ENCODE measurements at regions of chr16 and their contacts with region 1.

Region 1: DNA sequence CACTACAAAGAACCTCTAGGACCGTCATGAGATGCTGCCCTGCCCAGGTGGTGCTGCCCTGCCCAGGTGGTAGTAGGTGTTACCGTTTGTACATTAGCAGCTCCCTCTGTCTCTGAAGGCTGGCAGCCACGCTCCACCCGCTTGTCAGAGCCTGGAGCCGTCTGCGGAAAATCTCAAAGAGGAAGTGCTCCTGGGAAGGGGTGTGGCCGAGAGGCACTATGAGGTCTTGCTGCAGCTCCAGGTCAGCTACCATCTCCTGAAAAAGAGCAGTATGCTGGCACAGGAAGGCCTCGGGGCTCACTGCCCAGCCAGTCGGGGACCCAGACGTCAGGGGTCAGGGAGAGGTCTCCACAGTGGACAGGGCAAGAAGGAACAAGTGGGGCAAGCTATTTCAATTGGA is 28.3 kb downstream of the ZNF276 start:
- DNase-seq: peak in 1 of 2 donors; percentile 26
- ATAC-seq: peak in 4 of 8 donors; percentile 30 to 55 (median 34)
- H3K4me3 ChIP-seq: no peak overlapping the region
- H3K27ac ChIP-seq: no peak overlapping the region
- H3K4me1 ChIP-seq: peaks cover 0 to 4% (median 0%) of the 10 kb centered on the region in 9 donors
- H3K27me3 ChIP-seq: no peaks in the 10 kb centered on the region
- CTCF ChIP-seq: no peak

Region 2: DNA sequence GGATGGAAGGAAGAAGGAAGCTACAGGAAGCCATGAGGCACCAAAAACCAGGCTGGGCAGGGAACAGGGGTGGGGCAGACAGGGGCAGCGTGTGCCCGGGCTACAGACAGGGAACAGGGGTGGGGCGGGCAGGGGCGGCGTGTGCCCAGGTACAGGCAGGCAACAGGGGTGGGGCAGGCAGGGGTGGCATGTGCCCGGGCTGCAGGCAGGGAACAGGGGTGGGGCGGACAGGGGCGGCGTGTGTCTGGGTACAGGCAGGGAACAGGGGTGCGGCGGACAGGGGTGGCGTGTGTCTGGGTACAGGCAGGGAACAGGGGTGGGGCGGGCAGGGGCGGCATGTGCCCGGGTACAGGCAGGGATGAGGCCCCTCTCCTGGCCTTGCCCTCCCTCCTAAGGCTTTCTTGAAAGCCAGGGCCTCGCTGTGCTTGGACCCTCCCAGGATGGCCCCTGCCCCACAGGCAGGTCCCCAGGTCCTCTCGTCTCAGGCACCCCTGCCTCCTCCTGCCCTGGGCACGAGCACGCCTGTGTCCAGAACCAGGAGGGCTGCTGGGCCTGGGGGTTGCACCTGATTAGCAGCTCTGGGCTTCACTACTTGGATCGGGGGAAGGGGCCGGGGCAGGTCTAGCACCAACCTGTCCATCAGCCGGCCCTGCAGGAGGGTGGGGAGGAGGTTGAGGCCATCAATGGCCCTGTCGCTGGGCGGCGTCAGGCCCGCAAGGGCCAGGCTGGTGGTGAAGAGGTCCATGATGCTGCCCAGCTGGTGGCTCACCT is 923.4 kb before region 1 on chr16:
- intact Hi-C with region 1: loop called in 1 of 10 experiments (anchors 5 kb)
- DNase-seq: no peak
- ATAC-seq: no peak
- H3K4me3 ChIP-seq: no peak overlapping the region
- H3K27ac ChIP-seq: no peak overlapping the region
- H3K4me1 ChIP-seq: no peaks in the 10 kb centered on the region
- H3K27me3 ChIP-seq: no peaks in the 10 kb centered on the region
- CTCF ChIP-seq: no peak

Region 3: GRCh38 chr16:89798832-89799370 is 49.3 kb after region 1 on chr16:
- intact Hi-C with region 1: loop called in 1 of 10 experiments (anchors 5 kb)
- DNase-seq: peak; percentile 19 to 36
- ATAC-seq: peak; percentile 65 to 90 (median 86)
- H3K4me3 ChIP-seq: peak overlapping the region in 5 of 10 donors; percentile 0 to 26 (median 22)
- H3K27ac ChIP-seq: peak overlapping the region in 6 of 10 donors; percentile 39 to 72 (median 52)
- H3K4me1 ChIP-seq: peaks cover 0 to 14% (median 9%) of the 10 kb centered on the region in 9 donors
- H3K27me3 ChIP-seq: no peaks in the 10 kb centered on the region
- CTCF ChIP-seq: no peak

Region 4: DNA sequence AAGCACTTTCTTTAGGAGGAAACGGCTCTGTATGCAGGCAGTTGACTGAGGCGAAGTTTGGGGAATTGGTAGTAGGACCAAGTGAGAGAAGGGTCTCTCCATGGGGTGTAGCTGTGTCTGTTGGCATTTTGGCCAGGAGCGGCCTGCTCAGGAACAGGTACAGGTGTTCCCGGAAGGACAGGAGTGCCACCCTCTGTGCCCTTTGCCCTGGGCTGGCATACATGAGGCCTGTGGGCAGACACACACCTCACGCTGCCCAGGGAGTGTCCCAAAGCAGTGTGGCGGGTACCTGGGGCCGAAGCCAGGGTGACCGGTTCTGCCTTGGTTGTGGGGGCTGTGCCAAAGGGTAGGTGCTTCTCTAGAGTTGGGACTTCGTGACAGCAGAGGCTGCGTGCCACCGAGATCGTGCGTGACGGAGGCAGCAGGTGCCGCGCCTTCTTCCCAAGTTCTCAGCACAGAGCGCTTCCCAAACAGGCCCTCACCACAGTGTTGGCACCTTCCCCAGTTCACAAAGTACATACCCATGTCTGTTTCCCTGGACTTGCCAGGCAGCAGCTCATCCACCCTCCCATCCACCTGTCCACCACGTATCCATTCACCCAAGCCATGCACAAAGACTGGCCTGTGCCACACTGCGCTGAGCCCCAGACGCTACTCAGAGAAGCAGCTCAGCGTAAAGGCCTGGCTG is 103.8 kb after region 1 on chr16:
- intact Hi-C with region 1: loop called in 2 of 10 experiments (anchors 2 to 10 kb)
- DNase-seq: no peak
- ATAC-seq: no peak
- H3K4me3 ChIP-seq: no peak overlapping the region
- H3K27ac ChIP-seq: no peak overlapping the region
- H3K4me1 ChIP-seq: no peaks in the 10 kb centered on the region
- H3K27me3 ChIP-seq: no peaks in the 10 kb centered on the region
- CTCF ChIP-seq: no peak

Region 5: DNA sequence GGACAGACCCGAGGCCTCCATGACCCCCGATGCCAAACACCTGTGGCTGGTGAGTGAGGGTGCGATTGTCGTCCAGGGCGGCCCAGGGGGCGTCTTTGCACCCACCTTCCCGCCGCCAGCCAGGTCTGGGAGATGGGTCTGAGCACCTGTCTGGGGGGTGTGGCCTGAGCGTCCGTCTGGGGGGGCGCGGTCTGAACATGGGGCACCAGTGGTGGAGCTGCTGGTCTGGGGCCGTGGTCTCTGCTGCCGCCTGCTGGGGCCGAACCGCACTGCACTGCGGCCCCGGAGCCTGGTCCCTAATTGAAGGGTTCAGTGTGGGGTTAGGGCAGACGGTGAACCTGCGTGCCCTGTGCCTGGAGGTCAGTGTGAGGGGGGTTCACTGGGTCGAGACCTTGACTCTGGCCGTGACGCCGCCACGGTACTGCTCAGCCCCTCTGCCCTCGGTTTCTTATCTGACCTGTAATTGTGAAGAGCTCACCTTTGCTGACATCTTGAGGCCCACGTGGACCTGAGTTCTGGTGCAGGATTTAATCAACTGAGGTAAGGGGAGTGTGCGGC is 111.2 kb after region 1 on chr16:
- intact Hi-C with region 1: loop called in 8 of 10 experiments (anchors 1 to 10 kb)
- DNase-seq: peak; percentile 49 to 71
- ATAC-seq: peak; percentile 64 to 81 (median 78)
- H3K4me3 ChIP-seq: no peak overlapping the region
- H3K27ac ChIP-seq: no peak overlapping the region
- H3K4me1 ChIP-seq: peaks cover 0 to 32% (median 21%) of the 10 kb centered on the region in 9 donors
- H3K27me3 ChIP-seq: no peaks in the 10 kb centered on the region
- CTCF ChIP-seq: peak; percentile 91 to 98 (median 96)

Region 6: DNA sequence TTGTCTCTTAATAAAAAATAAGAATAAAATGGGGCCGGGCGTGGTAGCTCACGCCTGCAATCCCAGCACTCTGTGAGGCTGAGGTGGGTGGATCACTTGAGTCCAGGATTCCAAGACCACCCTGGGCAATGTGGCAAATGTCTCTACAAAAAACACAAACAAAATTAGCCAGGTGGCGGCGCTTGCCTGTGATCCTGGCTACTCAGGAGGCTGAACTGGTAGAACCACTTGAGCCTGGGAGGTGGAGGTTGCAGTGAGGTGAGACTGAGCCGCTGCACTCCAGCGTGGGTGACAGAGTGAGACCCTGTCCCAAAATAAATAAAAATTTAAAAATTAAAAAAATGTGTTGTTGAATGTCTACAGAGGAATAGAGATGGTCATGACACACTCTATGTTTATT is 196.0 kb after region 1 on chr16:
- intact Hi-C with region 1: no loop called
- DNase-seq: no peak
- ATAC-seq: no peak
- H3K4me3 ChIP-seq: no peak overlapping the region
- H3K27ac ChIP-seq: no peak overlapping the region
- H3K4me1 ChIP-seq: peaks cover 0 to 21% (median 15%) of the 10 kb centered on the region in 9 donors
- H3K27me3 ChIP-seq: peaks cover 0 to 23% (median 6%) of the 10 kb centered on the region in 7 donors
- CTCF ChIP-seq: no peak